K562 (cell line): ENCODE measurements at regions of chr3 and their contacts with region 1.

Region 1: GRCh38 chr3:169149349-169149890 is 514.1 kb downstream of the MECOM start:
- DNase-seq: peak; percentile 73 to 89 (median 78)
- ATAC-seq: peak; percentile 65
- H3K4me3 ChIP-seq: peak overlapping the region; percentile 23
- H3K27ac ChIP-seq: peak overlapping the region; percentile 89
- H3K4me1 ChIP-seq: peaks cover 6 to 15% of the 10 kb centered on the region in 2 experiments; a peak in 4 of 5 replicates
- H3K27me3 ChIP-seq: no peaks in the 10 kb centered on the region; a peak in 1 of 5 replicates
- CTCF ChIP-seq: peak; percentile 82 to 92 (median 90)
- EP300 ChIP-seq: peak; percentile 23; the same call in 1 of the 2 replicates
- POLR2A ChIP-seq: no peak; the same call in 1 of the 2 replicates
- RAD21 ChIP-seq: peak; percentile 80 to 81

Region 2: GRCh38 chr3:168977716-168978374 is 171.6 kb before region 1 on chr3:
- CTCF ChIA-PET with region 1: no interaction called
- POLR2A ChIA-PET with region 1: no interaction called
- in situ Hi-C with region 1: no loop called
- intact Hi-C with region 1: no loop called
- DNase-seq: no peak
- ATAC-seq: no peak
- H3K4me3 ChIP-seq: no peak overlapping the region
- H3K27ac ChIP-seq: no peak overlapping the region
- H3K4me1 ChIP-seq: no peaks in the 10 kb centered on the region
- H3K27me3 ChIP-seq: no peaks in the 10 kb centered on the region
- CTCF ChIP-seq: no peak
- EP300 ChIP-seq: no peak
- POLR2A ChIP-seq: no peak
- RAD21 ChIP-seq: no peak

Region 3: DNA sequence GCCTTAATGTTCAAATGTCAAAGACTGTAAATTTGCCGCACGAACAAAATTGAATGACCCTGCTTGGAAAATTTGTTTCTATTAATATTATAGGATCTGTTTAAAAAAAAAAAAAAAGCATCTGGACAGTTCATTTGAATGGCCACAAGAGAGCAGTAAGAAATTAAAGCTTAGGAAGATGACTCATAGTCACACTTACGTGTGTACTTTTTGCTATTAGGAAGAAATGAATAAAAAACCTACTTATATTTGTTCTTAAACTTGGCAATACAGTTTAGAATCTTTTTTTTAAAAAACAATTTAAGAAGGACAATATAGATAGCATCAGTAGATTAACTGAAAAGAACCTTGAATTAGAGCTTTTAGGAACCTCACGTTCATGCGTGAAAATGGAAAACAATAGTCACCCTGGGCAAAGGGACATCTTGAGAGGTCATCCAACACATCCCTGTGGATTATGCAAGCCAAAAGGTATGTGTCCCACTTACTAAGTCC is 107.7 kb before region 1 on chr3:
- CTCF ChIA-PET with region 1: no interaction called
- POLR2A ChIA-PET with region 1: no interaction called
- in situ Hi-C with region 1: no loop called
- intact Hi-C with region 1: loop called (anchors 5 kb)
- DNase-seq: peak in 3 of 4 experiments; percentile 11 to 20 (median 13)
- ATAC-seq: peak; percentile 81
- H3K4me3 ChIP-seq: no peak overlapping the region
- H3K27ac ChIP-seq: no peak overlapping the region
- H3K4me1 ChIP-seq: no peaks in the 10 kb centered on the region
- H3K27me3 ChIP-seq: no peaks in the 10 kb centered on the region
- CTCF ChIP-seq: peak; percentile 18 to 61 (median 22); a peak in 3 of 6 replicates
- EP300 ChIP-seq: no peak
- POLR2A ChIP-seq: no peak
- RAD21 ChIP-seq: peak; percentile 55 to 56

Region 4: DNA sequence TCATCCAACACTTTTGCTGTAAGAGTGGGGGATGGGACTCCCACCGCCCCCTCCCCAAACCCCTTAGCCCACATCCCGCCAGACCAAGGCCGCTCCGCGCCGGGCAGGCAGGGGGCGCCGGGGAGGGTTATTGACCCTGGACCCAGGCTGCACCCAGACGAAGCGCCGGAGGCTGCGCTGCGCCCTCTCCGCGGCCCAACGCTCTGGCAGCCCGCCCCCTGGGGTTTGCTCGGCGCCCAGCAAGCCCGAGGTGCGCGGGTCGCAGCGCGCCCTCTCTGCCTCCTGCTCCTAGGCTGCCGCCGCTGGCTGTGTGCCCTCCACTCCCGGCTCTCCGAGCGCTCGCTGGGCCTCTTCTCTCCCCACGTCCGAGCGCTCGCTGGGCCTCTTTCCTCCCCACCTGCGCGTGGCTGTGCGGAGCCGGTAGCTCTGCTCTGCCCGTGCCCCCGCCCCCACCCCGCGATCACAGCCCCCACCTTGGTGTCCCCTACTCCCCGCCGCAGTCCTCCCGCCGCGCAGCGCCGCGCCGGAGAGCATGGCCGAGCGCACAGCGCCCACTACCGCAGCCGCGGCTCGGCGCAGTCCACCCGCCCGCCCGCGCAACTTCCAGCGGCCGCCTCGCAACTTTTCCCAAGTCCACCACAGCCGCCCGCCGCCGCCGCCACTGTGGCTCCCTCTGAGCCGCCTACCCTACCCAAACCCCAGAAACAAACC is 512.9 kb after region 1 on chr3:
- CTCF ChIA-PET with region 1: interaction called, 9 read pairs
- POLR2A ChIA-PET with region 1: no interaction called
- in situ Hi-C with region 1: no loop called
- intact Hi-C with region 1: loop called (anchors 1 kb)
- DNase-seq: peak; percentile 72 to 80 (median 76)
- ATAC-seq: peak; percentile 95
- H3K4me3 ChIP-seq: peak overlapping the region; percentile 53
- H3K27ac ChIP-seq: no peak overlapping the region
- H3K4me1 ChIP-seq: peaks cover 6 to 26% of the 10 kb centered on the region in 2 experiments; a peak in 4 of 5 replicates
- H3K27me3 ChIP-seq: peaks cover 56 to 61% of the 10 kb centered on the region in 2 experiments
- CTCF ChIP-seq: peak; percentile 59 to 98 (median 62); a peak in 5 of 6 replicates
- EP300 ChIP-seq: no peak
- POLR2A ChIP-seq: no peak
- RAD21 ChIP-seq: peak; percentile 27 to 30; a peak in 3 of 4 replicates